RWPE1 (cell line): ENCODE measurements at regions of chr1 and their contacts with region 1.

Region 1: DNA sequence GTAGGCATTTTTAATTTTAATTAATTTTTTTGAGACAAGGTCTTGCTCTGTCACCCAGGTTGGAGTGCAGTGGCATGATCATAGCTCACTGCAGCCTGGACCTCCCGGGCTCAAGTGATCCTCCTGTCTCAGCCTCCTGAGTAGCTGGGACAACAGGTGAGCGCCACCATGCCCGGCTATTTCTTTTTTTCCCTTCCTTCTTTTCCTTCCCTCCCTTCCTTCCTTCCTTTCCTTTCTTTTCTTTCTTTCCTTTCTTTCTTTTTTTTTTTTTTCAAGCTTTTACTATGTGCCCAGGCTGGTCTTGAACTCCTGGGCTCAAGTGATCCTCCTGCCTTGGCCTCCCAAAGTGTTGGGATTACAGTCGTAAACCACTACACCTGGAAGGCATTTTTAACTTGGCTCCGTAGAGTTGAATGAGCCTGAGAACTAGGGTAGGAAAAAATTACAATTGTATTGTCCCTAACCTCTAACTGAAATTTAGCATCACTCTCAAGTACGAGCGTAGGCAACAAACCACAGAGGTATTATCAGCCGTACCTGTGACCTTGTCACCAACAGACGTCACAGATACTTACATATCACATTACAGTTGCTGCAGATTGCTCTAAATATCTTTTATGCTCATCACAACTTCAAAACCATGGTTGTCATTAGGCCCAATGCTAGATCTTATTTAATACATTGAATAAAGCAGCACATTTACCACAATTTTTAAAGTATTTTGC is 8.0 kb downstream of the RUNX3 start:
- DNase-seq: no peak
- H3K27ac ChIP-seq: no peak overlapping the region
- CTCF ChIP-seq: no peak

Region 2: DNA sequence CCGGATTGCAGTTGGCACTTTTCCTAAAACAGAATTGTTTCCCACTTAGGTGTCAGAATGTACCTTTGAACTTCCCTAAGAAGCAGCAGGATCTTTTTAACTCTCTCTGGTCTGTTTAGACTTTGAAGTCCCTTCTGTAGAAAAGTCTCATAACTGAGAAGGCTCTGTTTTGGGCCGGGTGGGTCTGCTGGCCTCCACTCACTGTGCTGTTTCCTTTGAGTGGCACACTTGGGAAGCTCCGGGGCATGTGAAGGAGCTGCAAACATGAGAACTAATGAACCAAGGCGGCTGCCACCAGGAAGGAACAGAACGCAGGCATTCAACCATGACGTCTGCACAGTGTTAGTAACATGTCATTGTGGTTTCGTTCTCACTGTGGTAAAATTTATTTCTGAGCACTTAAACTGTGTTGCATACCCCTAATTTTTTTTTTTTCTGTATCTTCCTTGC is 385.7 kb before region 1 on chr1:
- CTCF ChIA-PET with region 1: no interaction called
- POLR2A ChIA-PET with region 1: no interaction called
- DNase-seq: no peak
- H3K27ac ChIP-seq: no peak overlapping the region
- CTCF ChIP-seq: no peak

Region 3: GRCh38 chr1:24932284-24932683 is 10.2 kb after region 1 on chr1:
- CTCF ChIA-PET with region 1: interaction called, 10 read pairs
- POLR2A ChIA-PET with region 1: no interaction called
- DNase-seq: peak; percentile 65
- H3K27ac ChIP-seq: no peak overlapping the region
- CTCF ChIP-seq: peak; percentile 84